AG04450 (cell line): ENCODE measurements at regions of chr15 and their contacts with region 1.

Region 1: GRCh38 chr15:93997084-93997918 is 234.1 kb upstream of the MCTP2 start:
- DNase-seq: peak; percentile 8
- H3K4me3 ChIP-seq: no peak overlapping the region
- H3K27ac ChIP-seq: no peak overlapping the region
- H3K27me3 ChIP-seq: no peaks in the 10 kb centered on the region
- CTCF ChIP-seq: peak; percentile 96

Region 2: GRCh38 chr15:93974804-93975481 is 22.4 kb before region 1 on chr15:
- CTCF ChIA-PET with region 1: interaction called, 11 read pairs
- POLR2A ChIA-PET with region 1: no interaction called
- DNase-seq: peak; percentile 16
- H3K4me3 ChIP-seq: no peak overlapping the region
- H3K27ac ChIP-seq: no peak overlapping the region
- H3K27me3 ChIP-seq: peaks cover 4% of the 10 kb centered on the region
- CTCF ChIP-seq: peak; percentile 58

Region 3: DNA sequence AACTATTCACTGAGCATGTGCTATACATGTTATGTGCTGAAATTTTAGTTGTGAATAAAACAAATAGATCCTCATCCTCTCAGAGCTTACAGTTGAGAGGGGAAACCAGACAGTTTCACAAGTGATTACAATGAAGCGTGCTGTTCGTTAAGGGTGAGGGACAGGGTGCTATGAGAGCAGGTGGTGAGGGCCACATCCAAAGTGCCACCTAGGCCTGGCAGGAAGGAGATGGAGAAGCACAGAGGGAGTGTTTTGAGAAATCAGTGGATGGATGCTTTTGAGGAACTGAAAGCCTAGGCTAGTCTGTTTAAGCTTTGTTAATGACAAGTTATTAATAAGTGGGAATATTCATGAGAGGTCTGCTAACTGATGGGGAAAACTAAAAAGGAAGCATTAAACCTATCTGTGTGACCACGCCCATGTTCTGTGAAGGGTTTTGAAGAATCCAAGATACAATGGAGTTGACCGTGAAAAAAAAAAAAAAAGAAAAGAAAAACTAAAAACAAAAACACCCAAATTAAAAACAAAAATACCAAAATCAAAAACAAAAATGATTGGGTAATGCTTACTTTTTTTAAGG is 241.3 kb after region 1 on chr15:
- CTCF ChIA-PET with region 1: no interaction called
- POLR2A ChIA-PET with region 1: no interaction called
- DNase-seq: no peak
- H3K4me3 ChIP-seq: no peak overlapping the region
- H3K27ac ChIP-seq: peak overlapping the region; percentile 42
- H3K27me3 ChIP-seq: no peaks in the 10 kb centered on the region
- CTCF ChIP-seq: no peak